HepG2 (cell line): ENCODE measurements at regions of chr4 and their contacts with region 1.

Region 1: DNA sequence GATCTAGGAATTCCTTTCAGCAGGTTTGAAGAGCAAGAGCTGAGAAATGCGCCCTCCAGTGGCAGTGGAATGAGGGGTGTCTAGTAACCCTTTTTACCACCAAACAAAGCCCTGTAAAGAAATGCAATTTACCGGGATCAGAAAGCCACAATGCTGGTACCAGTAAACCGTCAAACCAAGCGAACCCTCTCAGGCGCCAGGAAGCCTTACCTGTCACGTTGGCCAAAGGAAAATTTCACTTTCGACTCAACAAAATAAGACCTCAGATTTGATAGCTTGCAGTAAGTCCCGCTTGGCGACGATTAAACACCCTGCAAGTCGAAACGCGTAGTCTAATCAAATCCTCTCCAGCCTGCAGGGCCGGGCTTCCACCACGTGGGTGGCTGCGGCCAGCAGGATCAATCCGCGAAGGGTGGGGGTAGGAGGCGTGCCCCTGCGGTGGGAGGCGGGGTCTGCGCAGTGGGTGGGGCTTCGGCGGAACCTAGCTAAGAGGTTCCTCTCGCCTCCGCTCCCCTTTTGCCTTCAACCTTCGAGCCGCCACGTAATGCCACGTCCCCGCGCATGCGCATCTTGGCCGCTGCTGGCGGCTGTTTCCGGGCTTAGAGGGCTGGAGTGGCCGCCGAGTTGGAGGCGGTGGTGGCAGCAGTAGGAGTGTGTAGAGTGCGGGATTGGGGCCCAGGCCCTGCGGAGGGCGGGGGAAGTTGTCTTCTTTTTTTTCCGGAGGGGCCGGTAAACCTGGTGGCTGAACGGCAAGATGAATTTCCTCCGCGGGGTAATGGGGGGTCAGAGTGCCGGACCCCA is at the start of gene USO1:
- DNase-seq: peak; percentile 96
- ATAC-seq: peak; percentile 86
- H3K4me3 ChIP-seq: peak within 1 kb of the TSS; percentile 76 to 87 (median 83)
- H3K27ac ChIP-seq: peak within 1 kb of the TSS; percentile 98
- H3K4me1 ChIP-seq: peaks cover 53% of the 10 kb centered on the region
- H3K27me3 ChIP-seq: no peaks in the 10 kb centered on the region; a peak in 1 of 5 replicates
- CTCF ChIP-seq: peak; percentile 79
- EP300 ChIP-seq: peak in 1 of 2 experiments; percentile 22; a peak in 1 of 4 replicates
- POLR2A ChIP-seq: peak; percentile 85 to 89
- RAD21 ChIP-seq: peak; percentile 49; the same call in 1 of the 2 replicates
- total RNA-seq, gene USO1: 87.7 and 111 TPM in 2 replicates

Region 2: DNA sequence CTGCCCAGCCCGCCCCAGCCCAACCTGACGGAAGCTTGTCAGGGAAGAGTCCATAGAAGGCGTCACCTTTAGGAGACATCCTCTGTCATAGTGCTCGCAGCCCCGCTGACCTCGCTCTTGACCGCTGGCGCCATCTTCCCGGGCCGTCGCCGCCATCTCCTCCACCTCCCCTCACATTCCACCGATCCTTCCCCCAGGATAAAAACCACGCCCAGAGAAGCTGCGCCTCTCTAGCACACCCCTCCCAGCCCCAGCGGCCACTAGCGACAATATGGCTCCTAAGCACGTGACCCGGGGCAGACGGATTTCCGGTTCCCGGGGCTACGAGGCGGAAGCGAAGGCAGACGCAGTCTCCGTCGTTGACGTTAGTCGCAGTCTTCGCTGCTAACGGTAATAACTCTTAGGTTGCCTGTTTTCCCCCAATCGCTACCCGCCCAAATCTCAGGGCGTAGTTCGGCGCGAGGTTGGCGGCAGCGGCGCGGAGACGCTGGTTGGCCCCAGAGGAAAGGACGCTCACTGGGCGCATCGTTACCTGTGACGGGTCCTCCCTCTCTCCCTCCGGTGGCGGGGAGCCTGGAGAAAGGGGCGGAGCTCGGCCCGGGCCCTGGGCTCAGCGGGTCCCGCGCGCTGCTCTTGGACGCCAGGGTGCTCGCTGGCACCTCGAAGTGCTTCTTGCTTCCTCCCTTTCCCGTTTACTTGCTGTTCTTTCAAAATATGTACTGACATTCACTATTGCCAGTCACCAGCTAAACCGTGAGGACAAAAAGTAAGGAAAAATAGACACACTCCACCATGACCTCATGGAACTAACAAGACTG is 209.9 kb before region 1 on chr4 and contains the starts of genes RCHY1 and THAP6:
- CTCF ChIA-PET with region 1: no interaction called
- POLR2A ChIA-PET with region 1: interaction called, 19 read pairs
- in situ Hi-C with region 1: no loop called
- intact Hi-C with region 1: no loop called
- DNase-seq: peak; percentile 96
- ATAC-seq: peak; percentile 98
- H3K4me3 ChIP-seq: peak within 1 kb of the TSS; percentile 81 to 98 (median 89)
- H3K27ac ChIP-seq: peak within 1 kb of the TSS; percentile 77
- H3K4me1 ChIP-seq: peaks cover 45% of the 10 kb centered on the region
- H3K27me3 ChIP-seq: no peaks in the 10 kb centered on the region; a peak in 1 of 5 replicates
- CTCF ChIP-seq: peak; percentile 13
- EP300 ChIP-seq: peak in 1 of 2 experiments; percentile 32; a peak in 1 of 4 replicates
- POLR2A ChIP-seq: peak; percentile 94 to 97
- RAD21 ChIP-seq: peak; percentile 48
- total RNA-seq, gene RCHY1: 30.5 and 42.6 TPM in 2 replicates
- total RNA-seq, gene THAP6: 9.3 and 10.6 TPM in 2 replicates

Region 3: DNA sequence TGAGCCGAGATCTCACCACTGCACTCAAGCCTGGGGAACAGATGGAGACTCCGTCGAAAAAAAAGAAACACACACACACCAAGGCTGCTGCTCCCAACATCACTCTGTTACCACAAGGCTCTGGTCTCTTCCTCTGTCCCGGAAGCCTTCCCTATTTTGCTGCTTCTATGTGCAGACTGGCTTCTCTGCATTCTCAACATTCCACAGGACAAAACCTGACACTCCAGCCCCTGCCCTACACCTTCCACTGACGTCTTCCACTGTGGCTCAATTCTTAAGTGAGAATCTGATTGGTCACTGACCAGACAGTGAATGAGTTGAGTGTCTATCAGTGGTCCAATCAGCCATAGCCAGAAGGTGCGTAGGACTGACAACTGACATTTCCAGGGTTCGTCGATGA is 162.5 kb before region 1 on chr4:
- CTCF ChIA-PET with region 1: no interaction called
- POLR2A ChIA-PET with region 1: no interaction called
- in situ Hi-C with region 1: no loop called
- intact Hi-C with region 1: no loop called
- DNase-seq: no peak
- ATAC-seq: peak; percentile 73
- H3K4me3 ChIP-seq: no peak overlapping the region
- H3K27ac ChIP-seq: no peak overlapping the region
- H3K4me1 ChIP-seq: no peaks in the 10 kb centered on the region
- H3K27me3 ChIP-seq: peaks cover 1 to 6% of the 10 kb centered on the region in 2 experiments; a peak in 2 of 5 replicates
- CTCF ChIP-seq: no peak
- EP300 ChIP-seq: no peak
- POLR2A ChIP-seq: no peak
- RAD21 ChIP-seq: no peak

Region 4: GRCh38 chr4:75673027-75673958 is 51.0 kb before region 1 on chr4 and contains the start of gene G3BP2:
- CTCF ChIA-PET with region 1: no interaction called
- POLR2A ChIA-PET with region 1: interaction called, 43 read pairs
- in situ Hi-C with region 1: loop called (anchors 5 kb)
- intact Hi-C with region 1: loop called (anchors 1 kb)
- DNase-seq: peak; percentile 96
- ATAC-seq: peak; percentile 96
- H3K4me3 ChIP-seq: peak within 1 kb of the TSS; percentile 87 to 100 (median 99)
- H3K27ac ChIP-seq: peak within 1 kb of the TSS; percentile 87
- H3K4me1 ChIP-seq: peaks cover 41% of the 10 kb centered on the region
- H3K27me3 ChIP-seq: no peaks in the 10 kb centered on the region; a peak in 1 of 5 replicates
- CTCF ChIP-seq: no peak
- EP300 ChIP-seq: peak in 1 of 2 experiments; percentile 13; a peak in 1 of 4 replicates
- POLR2A ChIP-seq: peak; percentile 82 to 86
- RAD21 ChIP-seq: peak; percentile 48; the same call in 1 of the 2 replicates
- total RNA-seq, gene G3BP2: 179 and 316 TPM in 2 replicates

Region 5: DNA sequence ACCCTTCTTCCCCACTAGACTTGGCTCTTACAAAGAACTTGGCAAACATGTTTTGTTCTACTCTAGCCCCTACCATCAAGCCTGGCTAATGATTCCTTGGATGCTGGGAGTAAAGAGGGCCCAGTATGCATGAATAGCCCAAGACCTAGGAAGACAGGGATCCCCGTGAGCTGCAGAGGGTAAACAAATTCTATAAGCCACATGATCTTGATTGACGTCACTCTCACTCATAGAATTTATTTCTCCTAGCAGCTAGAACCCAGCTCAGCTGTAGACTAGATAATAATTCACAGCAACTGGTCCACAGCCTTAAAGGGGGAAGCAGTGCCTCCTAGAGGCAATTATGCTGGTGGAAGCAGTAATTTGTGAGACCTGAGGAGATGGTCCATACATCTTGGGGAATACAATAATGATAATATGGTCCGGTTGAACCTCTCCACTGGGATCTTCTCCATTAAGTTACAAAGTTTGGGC is 16.0 kb before region 1 on chr4:
- CTCF ChIA-PET with region 1: no interaction called
- POLR2A ChIA-PET with region 1: interaction called, 29 read pairs
- in situ Hi-C with region 1: no loop called
- intact Hi-C with region 1: loop called (anchors 1 kb)
- DNase-seq: peak; percentile 43
- ATAC-seq: peak; percentile 86
- H3K4me3 ChIP-seq: no peak overlapping the region
- H3K27ac ChIP-seq: no peak overlapping the region
- H3K4me1 ChIP-seq: peaks cover 15% of the 10 kb centered on the region
- H3K27me3 ChIP-seq: no peaks in the 10 kb centered on the region
- CTCF ChIP-seq: peak; percentile 73
- EP300 ChIP-seq: no peak
- POLR2A ChIP-seq: no peak
- RAD21 ChIP-seq: peak; percentile 65

Region 6: GRCh38 chr4:75745161-75745560 is 20.9 kb after region 1 on chr4:
- CTCF ChIA-PET with region 1: no interaction called
- POLR2A ChIA-PET with region 1: interaction called, 15 read pairs
- in situ Hi-C with region 1: no loop called
- intact Hi-C with region 1: no loop called
- DNase-seq: peak; percentile 67
- ATAC-seq: peak; percentile 88
- H3K4me3 ChIP-seq: no peak overlapping the region
- H3K27ac ChIP-seq: no peak overlapping the region
- H3K4me1 ChIP-seq: peaks cover 16% of the 10 kb centered on the region
- H3K27me3 ChIP-seq: no peaks in the 10 kb centered on the region
- CTCF ChIP-seq: no peak
- EP300 ChIP-seq: no peak
- POLR2A ChIP-seq: no peak
- RAD21 ChIP-seq: no peak

Region 7: GRCh38 chr4:76198411-76199237 is 474.4 kb after region 1 on chr4:
- CTCF ChIA-PET with region 1: no interaction called
- POLR2A ChIA-PET with region 1: no interaction called
- in situ Hi-C with region 1: no loop called
- intact Hi-C with region 1: no loop called
- DNase-seq: no peak
- ATAC-seq: no peak
- H3K4me3 ChIP-seq: no peak overlapping the region
- H3K27ac ChIP-seq: no peak overlapping the region
- H3K4me1 ChIP-seq: peaks cover 51% of the 10 kb centered on the region
- H3K27me3 ChIP-seq: no peaks in the 10 kb centered on the region
- CTCF ChIP-seq: no peak
- EP300 ChIP-seq: no peak
- POLR2A ChIP-seq: no peak
- RAD21 ChIP-seq: no peak